ENCODE measurements at regions of chr3 and their contacts with region 1.

Region 1: GRCh38 chr3:177197041-177197727 is at the start of gene TBL1XR1:
- DNase-seq: peak; percentile 86
- H3K4me3 Mint-ChIP-seq: peak within 1 kb of the TSS; percentile 97
- H3K27ac Mint-ChIP-seq: peak within 1 kb of the TSS; percentile 100
- H3K4me1 Mint-ChIP-seq: peaks cover 51% of the 10 kb centered on the region
- H3K27me3 Mint-ChIP-seq: no peaks in the 10 kb centered on the region
- total RNA-seq, gene TBL1XR1: 168 and 169 TPM in 2 replicates

Region 2: DNA sequence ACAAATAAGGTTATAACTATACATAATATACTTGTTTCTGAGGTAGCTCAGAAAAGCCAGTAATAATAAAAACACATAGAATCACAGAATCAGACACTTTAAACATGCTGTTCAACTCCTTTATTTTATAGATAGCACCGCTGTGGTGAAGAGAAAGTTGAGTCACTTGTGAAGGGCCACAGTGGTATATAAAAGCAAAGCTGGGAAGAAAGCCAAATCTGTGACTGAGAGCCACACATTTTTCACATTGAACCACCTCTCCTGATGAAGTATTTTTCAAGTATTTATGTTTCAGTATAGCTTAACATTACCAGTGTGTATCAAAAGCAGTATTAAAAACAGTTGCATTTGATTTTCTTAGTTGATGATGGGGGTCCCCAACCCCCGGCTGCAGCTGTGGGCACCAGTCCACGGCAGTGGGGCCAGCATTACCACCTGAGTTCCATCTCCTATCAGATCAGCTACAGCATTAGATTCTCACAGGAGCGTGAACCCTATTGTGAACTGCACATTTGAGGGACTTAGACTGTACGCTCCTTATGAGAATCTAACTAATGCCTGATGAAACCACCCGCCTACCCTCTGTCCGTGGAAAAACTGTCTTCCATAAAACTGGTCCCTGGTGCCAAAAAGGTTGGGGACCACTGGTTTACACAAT is 46.1 kb before region 1 on chr3:
- intact Hi-C with region 1: loop called (anchors 2 kb)
- DNase-seq: no peak
- H3K4me3 Mint-ChIP-seq: peak overlapping the region; percentile 28
- H3K27ac Mint-ChIP-seq: peak overlapping the region; percentile 57
- H3K4me1 Mint-ChIP-seq: peaks cover 43% of the 10 kb centered on the region
- H3K27me3 Mint-ChIP-seq: no peaks in the 10 kb centered on the region

Region 3: GRCh38 chr3:177284383-177284881 is 87.2 kb after region 1 on chr3:
- intact Hi-C with region 1: loop called (anchors 5 kb)
- DNase-seq: peak; percentile 9
- H3K4me3 Mint-ChIP-seq: no peak overlapping the region
- H3K27ac Mint-ChIP-seq: no peak overlapping the region
- H3K4me1 Mint-ChIP-seq: peaks cover 23% of the 10 kb centered on the region
- H3K27me3 Mint-ChIP-seq: no peaks in the 10 kb centered on the region

Region 4: GRCh38 chr3:177337541-177338331 is 140.6 kb after region 1 on chr3:
- intact Hi-C with region 1: loop called (anchors 1 kb)
- DNase-seq: peak; percentile 43
- H3K4me3 Mint-ChIP-seq: no peak overlapping the region
- H3K27ac Mint-ChIP-seq: peak overlapping the region; percentile 87
- H3K4me1 Mint-ChIP-seq: peaks cover 45% of the 10 kb centered on the region
- H3K27me3 Mint-ChIP-seq: no peaks in the 10 kb centered on the region

Region 5: DNA sequence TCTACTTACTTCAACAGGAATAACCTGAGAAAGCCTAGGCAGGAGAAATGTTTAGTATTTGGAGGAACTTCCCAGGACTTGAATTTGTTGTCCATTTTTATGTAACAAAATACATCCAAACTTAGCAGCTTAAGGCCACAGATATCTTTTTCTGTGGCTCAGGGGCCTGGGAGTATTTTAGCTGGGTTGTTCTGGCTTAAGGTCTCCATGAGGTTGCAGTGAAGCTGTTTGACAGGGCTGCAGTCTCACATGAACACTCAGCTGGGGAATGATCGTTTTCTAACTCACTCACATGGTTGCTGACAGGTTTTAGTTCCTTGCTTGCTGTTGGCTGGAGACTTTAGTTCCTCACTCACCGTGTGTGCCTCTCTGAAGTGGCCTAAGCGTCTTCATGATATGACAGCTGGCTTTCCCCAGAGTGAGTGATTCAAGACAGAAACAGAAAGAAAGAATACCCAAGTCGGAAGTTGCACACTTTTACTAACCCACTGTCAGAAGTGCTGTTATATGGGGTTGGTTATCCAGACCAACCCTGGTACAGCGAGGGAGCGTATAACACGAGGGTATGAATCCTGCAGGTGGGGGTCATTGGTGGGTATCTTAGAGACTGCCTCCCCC is 229.8 kb after region 1 on chr3:
- intact Hi-C with region 1: loop called (anchors 1 kb)
- DNase-seq: peak; percentile 58
- H3K4me3 Mint-ChIP-seq: peak overlapping the region; percentile 54
- H3K27ac Mint-ChIP-seq: peak overlapping the region; percentile 85
- H3K4me1 Mint-ChIP-seq: peaks cover 35% of the 10 kb centered on the region
- H3K27me3 Mint-ChIP-seq: peaks cover 2% of the 10 kb centered on the region

Region 6: GRCh38 chr3:177679568-177680441 is 482.6 kb after region 1 on chr3:
- intact Hi-C with region 1: loop called (anchors 1 kb)
- DNase-seq: peak; percentile 9
- H3K4me3 Mint-ChIP-seq: no peak overlapping the region
- H3K27ac Mint-ChIP-seq: peak overlapping the region; percentile 24
- H3K4me1 Mint-ChIP-seq: peaks cover 22% of the 10 kb centered on the region
- H3K27me3 Mint-ChIP-seq: no peaks in the 10 kb centered on the region

Region 7: GRCh38 chr3:178001670-178002101 is 804.5 kb after region 1 on chr3:
- intact Hi-C with region 1: loop called (anchors 2 kb)
- DNase-seq: peak; percentile 21
- H3K4me3 Mint-ChIP-seq: no peak overlapping the region
- H3K27ac Mint-ChIP-seq: peak overlapping the region; percentile 78
- H3K4me1 Mint-ChIP-seq: peaks cover 38% of the 10 kb centered on the region
- H3K27me3 Mint-ChIP-seq: no peaks in the 10 kb centered on the region

Measured in activated T-helper 2 cell treated with anti-CD3 and anti-CD28 coated beads, Interferon-gamma antibody, Interleukin-2, Interleukin-4, amounts not matched to agents 10 μg/mL and 5 μg/mL and 100 μg/mL, durations not matched to agents 14 hours and 24 hours and 36 hours (primary cell).